HepG2 (cell line): ENCODE measurements at regions of chr6 and their contacts with region 1.

Region 1: GRCh38 chr6:117602151-117602898 is at the start of gene GOPC:
- DNase-seq: peak; percentile 98
- ATAC-seq: peak; percentile 97
- H3K4me3 ChIP-seq: peak within 1 kb of the TSS; percentile 79 to 88 (median 83)
- H3K27ac ChIP-seq: peak within 1 kb of the TSS; percentile 89
- H3K4me1 ChIP-seq: peaks cover 28% of the 10 kb centered on the region
- H3K27me3 ChIP-seq: no peaks in the 10 kb centered on the region; a peak in 1 of 5 replicates
- CTCF ChIP-seq: peak; percentile 63
- EP300 ChIP-seq: peak; percentile 4 to 75; a peak in 1 of 4 replicates
- POLR2A ChIP-seq: peak; percentile 95 to 98
- RAD21 ChIP-seq: peak; percentile 32; the same call in 1 of the 2 replicates
- total RNA-seq, gene GOPC: 41.5 and 54.3 TPM in 2 replicates

Region 2: DNA sequence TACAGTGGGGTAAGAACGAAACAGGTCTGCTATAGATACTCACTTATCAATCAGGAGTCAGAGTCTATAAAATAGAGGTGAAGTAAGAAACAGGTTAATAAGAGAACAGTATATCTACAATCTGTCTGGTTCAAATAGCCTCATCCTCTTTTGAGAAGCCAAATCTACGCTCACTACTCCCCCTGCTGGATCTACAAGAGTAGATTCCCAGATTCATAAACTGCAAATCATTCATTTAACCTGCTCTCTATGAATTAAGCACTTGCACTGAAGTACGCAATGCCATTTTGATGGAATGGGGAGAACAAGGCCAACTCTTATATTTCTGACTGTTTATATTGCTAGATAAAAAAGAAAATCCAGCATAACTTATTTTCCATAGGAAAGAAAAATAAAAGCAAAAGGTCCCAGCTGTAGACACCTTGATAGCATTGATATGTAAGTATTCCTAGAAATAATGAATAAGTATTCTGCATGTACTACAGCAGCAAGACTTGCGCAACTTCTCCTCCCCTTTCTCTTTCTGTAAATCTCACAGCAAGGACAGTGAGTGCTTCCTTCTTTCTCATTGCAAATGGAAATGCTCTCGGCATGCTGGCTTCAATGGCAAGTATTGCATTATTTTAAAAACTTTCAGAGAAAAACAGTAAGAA is 633.0 kb before region 1 on chr6:
- CTCF ChIA-PET with region 1: no interaction called
- POLR2A ChIA-PET with region 1: no interaction called
- in situ Hi-C with region 1: loop called (anchors 25 kb)
- intact Hi-C with region 1: no loop called
- DNase-seq: peak; percentile 64
- ATAC-seq: peak; percentile 89
- H3K4me3 ChIP-seq: no peak overlapping the region
- H3K27ac ChIP-seq: no peak overlapping the region
- H3K4me1 ChIP-seq: no peaks in the 10 kb centered on the region
- H3K27me3 ChIP-seq: no peaks in the 10 kb centered on the region
- CTCF ChIP-seq: peak; percentile 84
- EP300 ChIP-seq: no peak
- POLR2A ChIP-seq: no peak
- RAD21 ChIP-seq: peak; percentile 61

Region 3: GRCh38 chr6:117352466-117353081 is 249.8 kb before region 1 on chr6:
- CTCF ChIA-PET with region 1: interaction called, 18 read pairs
- POLR2A ChIA-PET with region 1: interaction called, 3 read pairs
- in situ Hi-C with region 1: loop called (anchors 5 kb)
- intact Hi-C with region 1: loop called (anchors 1 kb)
- DNase-seq: peak; percentile 29
- ATAC-seq: peak; percentile 82
- H3K4me3 ChIP-seq: no peak overlapping the region
- H3K27ac ChIP-seq: no peak overlapping the region
- H3K4me1 ChIP-seq: no peaks in the 10 kb centered on the region
- H3K27me3 ChIP-seq: no peaks in the 10 kb centered on the region
- CTCF ChIP-seq: peak; percentile 53
- EP300 ChIP-seq: no peak
- POLR2A ChIP-seq: no peak
- RAD21 ChIP-seq: no peak

Region 4: DNA sequence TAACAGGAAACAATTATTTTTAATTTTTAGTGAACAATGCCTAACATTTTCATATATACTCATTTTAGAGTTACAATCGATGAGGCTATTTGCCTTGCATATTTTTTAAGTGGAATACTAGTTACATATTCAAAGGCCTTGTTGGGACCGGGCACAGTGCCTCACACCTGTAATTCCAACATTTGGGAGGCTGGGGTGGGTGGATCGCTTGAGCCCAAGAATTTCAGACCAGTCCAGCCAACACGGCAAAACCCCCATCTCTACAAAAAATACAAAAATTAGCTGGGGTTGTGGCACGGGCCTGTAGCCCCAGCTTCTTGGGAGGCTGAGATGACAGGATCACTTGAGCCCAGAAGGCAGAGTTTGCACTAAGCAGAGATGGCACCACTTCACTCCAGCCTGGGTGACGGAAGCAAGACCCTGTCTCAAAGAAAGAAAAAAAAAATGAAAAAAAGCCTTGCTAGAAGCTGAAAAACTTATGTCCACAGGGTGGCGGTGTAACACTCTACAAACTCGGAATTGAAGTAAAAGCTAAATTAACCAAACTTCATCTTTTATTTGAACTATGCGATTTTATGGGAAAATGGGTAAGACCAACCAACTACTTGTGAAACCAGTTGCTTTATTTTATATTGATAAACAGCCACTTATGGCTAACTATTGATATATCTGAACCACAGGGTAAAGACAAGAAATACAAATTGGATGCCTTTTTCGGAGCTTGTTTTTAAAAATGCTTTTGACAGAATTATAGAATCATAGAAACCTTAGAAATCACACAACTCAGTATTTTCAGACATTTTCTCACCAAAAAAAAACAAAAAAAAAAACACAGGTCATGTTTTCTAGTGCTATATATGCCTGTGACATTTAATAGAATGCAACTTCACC is 152.5 kb before region 1 on chr6:
- CTCF ChIA-PET with region 1: interaction called, 35 read pairs
- POLR2A ChIA-PET with region 1: interaction called, 23 read pairs
- in situ Hi-C with region 1: no loop called
- intact Hi-C with region 1: loop called (anchors 1 kb)
- DNase-seq: peak; percentile 66
- ATAC-seq: peak; percentile 54; the same call in 2 of the 3 replicates
- H3K4me3 ChIP-seq: no peak overlapping the region
- H3K27ac ChIP-seq: no peak overlapping the region
- H3K4me1 ChIP-seq: peaks cover 33% of the 10 kb centered on the region
- H3K27me3 ChIP-seq: peaks cover 2 to 16% of the 10 kb centered on the region in 2 experiments; a peak in 4 of 5 replicates
- CTCF ChIP-seq: peak; percentile 79
- EP300 ChIP-seq: no peak
- POLR2A ChIP-seq: no peak
- RAD21 ChIP-seq: peak; percentile 75

Region 5: DNA sequence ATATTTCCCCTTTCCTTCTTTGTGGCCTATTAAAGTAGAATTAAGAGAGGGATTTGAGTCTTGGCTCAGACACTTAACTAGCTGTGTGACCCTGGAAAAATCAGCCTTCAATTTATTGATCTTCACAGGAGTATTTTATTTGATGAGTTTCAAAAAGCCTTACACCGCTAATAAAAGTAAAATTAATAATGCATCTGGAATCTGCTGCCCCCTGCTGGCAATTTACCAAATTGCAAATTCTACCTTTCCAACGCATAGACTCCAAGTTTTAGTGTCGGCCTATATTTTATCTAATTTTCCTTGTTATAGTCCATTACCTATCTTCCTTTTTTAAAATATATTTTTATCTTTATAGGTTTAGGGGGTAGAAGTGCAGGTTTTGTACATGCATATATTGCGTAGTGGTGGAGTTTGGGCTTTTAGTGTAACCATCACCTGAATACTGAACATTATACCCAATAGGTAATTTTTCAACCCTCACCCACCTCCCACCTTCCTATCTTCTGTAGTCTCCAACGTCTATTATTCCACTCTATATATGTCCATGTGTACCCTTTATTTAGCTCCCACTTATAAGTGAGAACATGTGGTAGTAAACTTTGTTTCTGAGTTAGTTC is 46.3 kb before region 1 on chr6:
- CTCF ChIA-PET with region 1: interaction called, 4 read pairs
- POLR2A ChIA-PET with region 1: interaction called, 4 read pairs
- in situ Hi-C with region 1: no loop called
- intact Hi-C with region 1: loop called (anchors 2 kb)
- DNase-seq: peak; percentile 27
- ATAC-seq: peak; percentile 21; the same call in 1 of the 3 replicates
- H3K4me3 ChIP-seq: no peak overlapping the region
- H3K27ac ChIP-seq: no peak overlapping the region
- H3K4me1 ChIP-seq: peaks cover 6% of the 10 kb centered on the region; the same call in 1 of the 2 replicates
- H3K27me3 ChIP-seq: no peaks in the 10 kb centered on the region
- CTCF ChIP-seq: peak; percentile 72
- EP300 ChIP-seq: no peak
- POLR2A ChIP-seq: no peak
- RAD21 ChIP-seq: peak; percentile 56

Region 6: DNA sequence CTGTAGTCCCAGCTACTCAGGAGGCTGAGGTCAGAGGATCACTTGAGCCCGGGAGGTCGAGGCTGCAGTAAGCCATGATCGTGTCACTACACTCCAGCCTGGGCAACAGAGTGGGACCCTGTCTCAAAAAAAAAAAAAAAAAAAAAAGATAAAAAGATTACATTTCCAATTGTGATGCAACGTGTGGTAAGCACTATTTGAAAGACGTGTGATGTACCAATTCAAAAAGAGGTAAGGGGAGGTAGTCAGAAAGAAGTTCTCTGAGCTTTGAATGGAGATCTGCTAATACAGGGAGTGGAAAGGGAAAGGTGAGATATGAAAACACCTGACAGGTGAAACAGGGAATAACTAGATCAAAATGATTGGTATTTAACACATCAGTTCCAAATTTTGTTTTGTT is 11.9 kb before region 1 on chr6:
- CTCF ChIA-PET with region 1: no interaction called
- POLR2A ChIA-PET with region 1: interaction called, 24 read pairs
- in situ Hi-C with region 1: no loop called
- intact Hi-C with region 1: no loop called
- DNase-seq: no peak
- ATAC-seq: no peak
- H3K4me3 ChIP-seq: no peak overlapping the region
- H3K27ac ChIP-seq: no peak overlapping the region
- H3K4me1 ChIP-seq: no peaks in the 10 kb centered on the region
- H3K27me3 ChIP-seq: no peaks in the 10 kb centered on the region
- CTCF ChIP-seq: no peak
- EP300 ChIP-seq: no peak
- POLR2A ChIP-seq: no peak
- RAD21 ChIP-seq: no peak

Region 7: GRCh38 chr6:117829594-117830319 is 227.4 kb after region 1 on chr6:
- CTCF ChIA-PET with region 1: no interaction called
- POLR2A ChIA-PET with region 1: no interaction called
- in situ Hi-C with region 1: no loop called
- intact Hi-C with region 1: loop called (anchors 10 kb)
- DNase-seq: peak; percentile 44
- ATAC-seq: peak; percentile 95
- H3K4me3 ChIP-seq: no peak overlapping the region; a peak in 1 of 6 replicates
- H3K27ac ChIP-seq: no peak overlapping the region
- H3K4me1 ChIP-seq: no peaks in the 10 kb centered on the region
- H3K27me3 ChIP-seq: no peaks in the 10 kb centered on the region
- CTCF ChIP-seq: peak; percentile 58
- EP300 ChIP-seq: no peak
- POLR2A ChIP-seq: no peak
- RAD21 ChIP-seq: no peak